ENCODE measurements at regions of chr17 and their contacts with region 1.

Region 1: GRCh38 chr17:71437166-71437565 is 683.7 kb upstream of the SOX9 start:
- DNase-seq: no peak
- H3K4me3 ChIP-seq: no peak overlapping the region
- H3K27ac ChIP-seq: no peak overlapping the region
- H3K4me1 ChIP-seq: no peaks in the 10 kb centered on the region
- H3K27me3 ChIP-seq: no peaks in the 10 kb centered on the region
- CTCF ChIP-seq: no peak
- EP300 ChIP-seq: no peak
- POLR2A ChIP-seq: no peak

Region 2: DNA sequence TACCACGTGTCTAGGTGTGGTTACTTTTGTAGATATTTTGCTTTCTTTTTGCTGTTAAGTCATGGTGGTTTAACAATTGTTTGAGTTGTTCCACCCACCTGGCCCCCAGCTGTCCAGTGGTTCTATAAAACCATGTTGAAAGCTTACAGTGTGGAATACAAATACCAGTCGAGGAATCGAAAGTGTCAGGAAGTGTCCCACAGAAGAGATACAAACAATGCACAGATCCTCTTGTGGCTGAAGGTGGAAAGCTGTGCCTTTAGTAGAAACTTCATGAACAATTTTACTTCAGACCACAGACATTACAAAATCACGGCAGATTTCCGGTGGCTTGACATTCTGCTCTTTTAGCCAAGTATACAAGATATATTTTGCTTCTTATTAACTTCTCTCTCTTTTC is 98.8 kb before region 1 on chr17:
- in situ Hi-C with region 1: no loop called
- intact Hi-C with region 1: no loop called
- DNase-seq: no peak
- H3K4me3 ChIP-seq: peak overlapping the region in 1 of 4 donors; percentile 3
- H3K27ac ChIP-seq: no peak overlapping the region
- H3K4me1 ChIP-seq: peaks cover 0 to 5% (median 2%) of the 10 kb centered on the region in 4 donors
- H3K27me3 ChIP-seq: no peaks in the 10 kb centered on the region
- CTCF ChIP-seq: no peak
- EP300 ChIP-seq: no peak
- POLR2A ChIP-seq: no peak

Region 3: DNA sequence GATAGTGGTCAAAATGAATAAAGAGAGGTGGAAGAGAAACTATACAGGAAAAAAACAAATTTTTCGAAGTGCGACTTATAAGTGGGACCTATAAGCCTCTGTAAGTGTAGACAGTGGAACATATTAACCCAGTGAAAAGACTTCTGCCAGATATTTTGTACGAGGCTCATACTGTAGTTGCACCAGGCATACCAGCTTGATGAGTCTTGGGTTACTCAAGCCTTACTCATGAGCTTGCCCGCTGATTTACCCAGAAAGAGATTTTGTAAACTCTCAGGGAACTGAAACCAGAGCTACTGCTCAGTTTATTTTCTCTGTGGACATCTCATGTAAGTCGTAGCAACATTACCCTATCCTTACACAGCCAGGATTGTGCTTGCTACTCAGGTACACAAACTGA is 24.4 kb before region 1 on chr17:
- in situ Hi-C with region 1: no loop called
- intact Hi-C with region 1: loop called (anchors 1 kb)
- DNase-seq: no peak
- H3K4me3 ChIP-seq: no peak overlapping the region
- H3K27ac ChIP-seq: no peak overlapping the region
- H3K4me1 ChIP-seq: no peaks in the 10 kb centered on the region
- H3K27me3 ChIP-seq: no peaks in the 10 kb centered on the region
- CTCF ChIP-seq: no peak
- EP300 ChIP-seq: no peak
- POLR2A ChIP-seq: no peak

Region 4: GRCh38 chr17:71535026-71535720 is 98.0 kb after region 1 on chr17:
- in situ Hi-C with region 1: no loop called
- intact Hi-C with region 1: no loop called
- DNase-seq: no peak
- H3K4me3 ChIP-seq: no peak overlapping the region
- H3K27ac ChIP-seq: no peak overlapping the region
- H3K4me1 ChIP-seq: no peaks in the 10 kb centered on the region
- H3K27me3 ChIP-seq: no peaks in the 10 kb centered on the region
- CTCF ChIP-seq: no peak
- EP300 ChIP-seq: no peak
- POLR2A ChIP-seq: no peak

Region 5: GRCh38 chr17:71656964-71657858 is 220.0 kb after region 1 on chr17:
- in situ Hi-C with region 1: no loop called
- intact Hi-C with region 1: no loop called
- DNase-seq: no peak
- H3K4me3 ChIP-seq: no peak overlapping the region
- H3K27ac ChIP-seq: no peak overlapping the region
- H3K4me1 ChIP-seq: no peaks in the 10 kb centered on the region
- H3K27me3 ChIP-seq: no peaks in the 10 kb centered on the region
- CTCF ChIP-seq: no peak
- EP300 ChIP-seq: no peak
- POLR2A ChIP-seq: no peak